GM23248 (cell line): ENCODE measurements at regions of chrX and their contacts with region 1.

Region 1: DNA sequence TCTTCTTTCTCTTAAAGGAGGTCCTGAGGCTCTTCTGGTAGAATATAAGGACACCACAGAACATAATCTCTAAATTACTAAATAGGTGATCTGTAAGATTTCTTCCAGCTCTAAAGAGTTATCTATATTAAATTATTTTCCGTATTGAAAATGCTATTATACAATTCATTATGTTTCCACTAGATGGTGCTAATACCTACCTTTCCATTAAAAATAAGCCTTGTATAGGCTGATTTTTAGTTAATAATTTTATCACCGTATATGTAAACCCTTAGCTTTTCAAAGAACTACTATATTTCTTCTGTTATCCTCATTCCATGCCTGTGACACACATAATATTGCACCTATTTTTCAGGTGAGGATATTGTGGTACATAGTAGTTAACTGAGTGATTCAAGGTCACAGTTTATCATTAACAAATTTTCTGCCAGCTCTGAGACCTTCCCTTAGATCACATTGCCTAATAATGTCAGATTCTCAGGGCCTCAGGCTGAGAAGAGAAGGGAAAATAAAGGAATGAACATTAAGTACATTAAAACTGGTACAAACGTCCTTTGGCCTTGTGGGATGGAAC is 138.8 kb downstream of the TEX11 start:
- DNase-seq: peak; percentile 15
- H3K4me3 ChIP-seq: no peak overlapping the region
- H3K27ac ChIP-seq: no peak overlapping the region
- H3K4me1 ChIP-seq: no peaks in the 10 kb centered on the region
- H3K27me3 ChIP-seq: no peaks in the 10 kb centered on the region

Region 2: DNA sequence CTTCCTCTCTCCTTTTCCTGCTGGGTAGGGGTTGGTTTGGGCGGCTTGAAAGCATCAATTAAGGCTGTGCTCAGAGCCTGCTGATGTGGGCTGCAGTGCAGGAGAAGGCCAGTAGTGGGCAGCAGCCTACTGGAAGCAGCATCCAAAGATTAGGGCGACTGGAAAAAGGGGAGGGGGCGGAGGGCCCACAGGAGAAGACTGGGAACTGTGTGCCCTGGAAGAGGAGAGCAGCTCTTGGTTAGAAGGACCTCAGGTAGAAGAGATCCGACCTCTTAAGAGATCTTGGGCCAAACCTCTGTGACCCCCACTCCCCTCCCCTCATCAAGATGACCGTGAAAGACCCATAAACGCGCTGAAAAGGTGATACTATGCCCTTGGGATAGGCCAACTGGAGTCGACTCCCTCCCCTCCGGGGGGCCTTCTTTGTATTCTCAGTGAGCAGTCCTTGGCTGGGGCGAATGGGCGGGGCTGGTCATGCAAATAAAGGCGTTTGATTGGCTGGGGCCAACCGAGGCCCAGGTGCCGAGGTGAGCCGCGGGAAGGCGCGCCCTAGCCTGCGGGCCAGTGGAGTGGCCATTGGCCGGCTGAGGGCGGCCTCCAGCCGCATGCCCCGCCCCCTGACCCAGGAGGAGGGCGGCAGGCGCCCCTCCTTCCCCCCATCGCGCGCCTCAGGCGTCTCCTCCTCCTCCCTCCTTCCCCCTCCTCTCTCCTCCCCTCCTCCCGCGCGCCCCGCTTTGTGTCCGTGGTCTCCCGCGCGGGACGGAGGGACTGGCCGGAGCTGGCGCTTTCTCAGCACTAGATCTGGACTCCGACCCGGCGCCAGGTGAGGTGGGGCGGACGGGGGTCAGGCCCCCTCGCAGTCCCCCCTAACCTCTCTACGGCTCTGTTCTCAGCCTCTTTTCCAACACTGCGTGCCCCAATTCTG is 315.0 kb before region 1 on chrX:
- in situ Hi-C with region 1: no loop called
- DNase-seq: peak; percentile 50
- H3K4me3 ChIP-seq: peak overlapping the region; percentile 45; the same call in 1 of the 2 replicates
- H3K27ac ChIP-seq: no peak overlapping the region
- H3K4me1 ChIP-seq: no peaks in the 10 kb centered on the region
- H3K27me3 ChIP-seq: no peaks in the 10 kb centered on the region

Region 3: DNA sequence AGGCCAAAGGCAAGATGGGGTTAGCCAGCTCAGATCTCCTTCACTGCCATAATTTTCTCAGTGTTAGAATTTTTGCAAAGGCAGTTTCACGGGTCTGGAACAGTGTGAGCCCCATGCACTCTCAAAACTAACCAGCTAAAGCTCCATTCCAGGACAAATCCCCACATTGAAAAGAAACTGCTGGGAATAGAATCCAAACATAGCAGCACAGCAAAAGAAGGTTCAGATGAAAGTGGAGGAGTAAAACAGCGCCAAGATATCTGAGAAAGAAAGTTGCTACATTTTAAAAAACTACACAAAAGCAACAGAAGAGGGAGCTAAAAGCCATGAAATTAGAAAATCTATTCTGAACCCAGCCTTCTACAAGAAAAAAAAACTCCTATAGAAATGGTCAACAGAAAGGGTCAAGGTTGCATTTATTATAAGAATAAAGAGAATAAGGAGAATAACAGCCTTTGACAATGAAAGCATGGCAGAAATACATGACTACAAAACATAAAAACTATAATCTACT is 200.8 kb after region 1 on chrX:
- in situ Hi-C with region 1: loop called (anchors 25 kb)
- DNase-seq: peak; percentile 47
- H3K4me3 ChIP-seq: no peak overlapping the region
- H3K27ac ChIP-seq: no peak overlapping the region
- H3K4me1 ChIP-seq: no peaks in the 10 kb centered on the region
- H3K27me3 ChIP-seq: no peaks in the 10 kb centered on the region

Region 4: DNA sequence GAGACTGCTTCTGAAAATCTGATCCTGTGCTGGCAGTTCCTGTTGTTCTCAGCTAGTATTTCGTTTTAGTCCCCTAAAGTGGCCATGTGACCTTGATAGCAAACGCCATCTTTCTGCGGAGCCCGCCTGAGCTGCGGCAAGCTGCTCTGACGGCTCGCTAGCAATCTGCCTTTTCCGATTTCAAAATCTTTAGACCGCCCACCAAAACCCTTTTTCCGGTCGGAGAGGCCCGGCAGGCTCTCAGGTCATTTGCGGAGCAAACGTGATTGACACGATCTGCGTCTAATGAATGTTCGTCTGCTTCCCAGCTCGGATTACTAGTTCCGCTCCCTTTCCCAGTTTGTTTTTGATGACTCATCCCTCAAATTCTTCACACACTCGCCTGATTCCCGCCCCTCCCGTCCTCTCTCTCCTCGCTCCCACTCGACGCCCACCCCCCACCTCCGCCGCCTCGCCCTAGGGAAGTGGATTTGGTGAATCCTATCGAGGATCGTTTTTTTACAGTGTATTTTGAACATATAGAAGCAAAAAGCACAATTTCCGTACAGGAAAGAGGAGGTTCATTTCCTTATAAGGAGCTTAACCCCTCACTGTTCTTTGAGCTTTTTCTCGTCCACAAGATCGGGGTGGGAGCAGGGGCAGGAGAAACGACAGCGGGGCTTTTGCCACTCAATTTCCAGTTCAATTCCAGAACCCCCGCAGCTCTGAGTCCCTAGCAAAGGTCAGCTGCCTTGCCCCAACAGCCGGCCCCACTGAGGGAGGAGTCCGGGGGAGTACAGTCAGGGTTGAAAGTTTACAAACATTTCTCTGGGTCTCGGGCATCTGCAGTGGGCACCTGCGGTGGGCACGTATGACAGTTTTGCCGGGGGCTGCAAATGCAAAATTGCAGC is 412.4 kb after region 1 on chrX:
- in situ Hi-C with region 1: loop called (anchors 25 kb)
- DNase-seq: peak; percentile 95
- H3K4me3 ChIP-seq: peak overlapping the region; percentile 86
- H3K27ac ChIP-seq: peak overlapping the region; percentile 77
- H3K4me1 ChIP-seq: peaks cover 19% of the 10 kb centered on the region
- H3K27me3 ChIP-seq: no peaks in the 10 kb centered on the region